GM10248 (cell line): ENCODE measurements at regions of chr16 and their contacts with region 1.

Region 1: DNA sequence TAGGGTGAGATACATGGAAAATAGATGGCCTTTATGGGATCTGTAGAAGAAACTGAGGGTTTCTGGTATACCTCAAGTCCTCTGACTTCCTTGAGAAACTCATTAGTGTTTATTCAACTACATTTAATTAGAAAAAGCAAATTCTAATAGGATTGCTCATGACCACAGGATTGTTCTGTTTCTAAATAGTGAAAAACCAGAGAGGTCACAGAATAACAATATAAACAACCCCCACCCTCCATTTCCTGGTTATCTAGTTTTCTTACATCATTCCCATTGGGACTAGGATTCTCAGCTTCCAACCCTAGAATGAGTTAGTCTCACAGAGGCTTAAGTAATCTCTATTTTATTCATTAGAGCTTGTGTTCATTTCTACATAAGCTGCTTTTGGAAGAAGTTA is 30.0 kb downstream of the SF3B3 start:
- DNase-seq: no peak
- CTCF ChIP-seq: no peak

Region 2: DNA sequence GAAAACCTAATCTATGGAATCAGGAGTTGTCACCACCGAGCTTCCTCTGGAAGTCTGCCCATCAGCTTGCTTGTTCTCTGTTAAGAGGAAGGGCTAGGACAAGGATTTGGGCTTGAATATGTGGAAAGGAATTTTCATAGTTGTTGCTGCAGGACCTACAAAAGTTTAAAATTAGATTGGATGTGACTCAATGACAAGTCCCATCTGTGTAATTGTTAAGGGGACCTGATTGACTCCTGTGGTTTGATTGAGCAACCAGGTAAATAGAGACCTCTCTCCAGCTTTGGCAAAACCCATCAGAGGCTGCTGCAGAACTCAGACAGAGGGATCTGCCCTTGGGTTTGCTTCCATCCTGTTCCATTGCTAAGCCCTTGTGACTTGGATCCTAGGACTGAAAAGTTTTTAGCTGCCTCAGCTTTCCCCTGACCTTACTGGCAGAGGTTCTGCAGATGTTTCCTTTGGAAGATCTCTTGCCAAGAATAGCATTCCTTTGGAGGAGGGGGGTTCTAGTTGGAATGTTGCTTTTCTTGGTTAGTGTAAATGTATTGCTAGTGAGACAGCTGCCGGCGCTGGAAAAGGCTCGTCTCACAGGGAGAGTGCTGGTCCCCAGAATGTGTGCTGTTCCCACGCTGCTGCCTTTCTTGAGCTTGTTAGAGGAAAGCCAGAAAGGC is 19.9 kb after region 1 on chr16:
- CTCF ChIA-PET with region 1: interaction called, 13 read pairs
- POLR2A ChIA-PET with region 1: no interaction called
- DNase-seq: no peak
- CTCF ChIP-seq: no peak

Region 3: DNA sequence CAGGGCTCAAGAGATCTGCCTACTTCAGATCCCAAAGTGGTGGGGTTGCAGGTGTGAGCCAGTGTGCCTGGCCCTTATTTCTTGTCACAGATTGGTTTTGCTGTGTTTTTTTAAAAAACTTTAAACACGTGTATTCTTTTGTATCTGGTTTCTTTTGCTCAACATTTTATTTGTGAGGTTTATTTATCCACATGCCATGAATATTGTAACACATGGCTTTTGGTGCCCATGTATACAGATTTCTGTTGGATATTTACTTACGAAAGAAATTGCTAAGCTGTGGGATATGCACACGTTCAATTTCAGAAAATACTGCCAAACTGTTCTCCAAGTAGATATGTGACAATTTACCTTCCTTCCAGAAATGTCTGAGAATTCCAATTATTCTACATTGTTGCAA is 74.1 kb after region 1 on chr16:
- CTCF ChIA-PET with region 1: no interaction called
- POLR2A ChIA-PET with region 1: no interaction called
- DNase-seq: no peak
- CTCF ChIP-seq: no peak

Region 4: GRCh38 chr16:70715055-70715858 is 161.6 kb after region 1 on chr16:
- CTCF ChIA-PET with region 1: no interaction called
- POLR2A ChIA-PET with region 1: no interaction called
- DNase-seq: no peak
- CTCF ChIP-seq: no peak